ENCODE measurements at regions of chr12 and their contacts with region 1.

Region 1: DNA sequence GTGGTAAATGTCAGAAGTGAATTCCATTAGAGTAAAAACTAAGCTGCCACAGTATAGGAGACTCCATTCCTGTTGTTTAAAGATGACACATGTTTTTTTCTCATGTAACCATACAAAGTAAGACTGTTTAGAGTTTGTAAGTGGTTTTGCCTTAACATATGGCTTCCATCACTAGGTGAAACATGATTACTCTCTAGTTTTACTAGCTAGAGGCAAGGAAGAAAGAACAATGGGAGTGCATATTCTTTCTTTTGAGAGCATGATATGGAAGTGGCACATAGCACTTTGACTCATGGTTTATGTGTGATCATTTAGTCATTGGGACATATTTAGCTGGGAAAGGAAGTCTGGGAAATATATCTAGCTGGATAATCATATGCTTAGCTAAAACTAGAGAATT is 7.7 kb downstream of the ATF7IP start:
- DNase-seq: no peak
- ATAC-seq: peak in 2 of 4 experiments; percentile 40 to 46
- H3K4me3 ChIP-seq: no peak overlapping the region
- H3K4me3 Mint-ChIP-seq: peak overlapping the region; percentile 35 to 51 (median 37)
- H3K27ac ChIP-seq: peak overlapping the region; percentile 36
- H3K27ac Mint-ChIP-seq: peak overlapping the region; percentile 80 to 82
- H3K4me1 ChIP-seq: peaks cover 18 to 38% of the 10 kb centered on the region in 2 experiments
- H3K4me1 Mint-ChIP-seq: peaks cover 61 to 68% (median 67%) of the 10 kb centered on the region in 3 donors
- H3K27me3 ChIP-seq: no peaks in the 10 kb centered on the region
- H3K27me3 Mint-ChIP-seq: no peaks in the 10 kb centered on the region

Region 2: GRCh38 chr12:14384783-14385638 is 11.8 kb after region 1 on chr12:
- CTCF ChIA-PET with region 1: interaction called, 4 to 8 read pairs
- POLR2A ChIA-PET with region 1: interaction called, 11 to 51 read pairs
- DNase-seq: peak; percentile 18 to 87 (median 54)
- ATAC-seq: peak; percentile 88 to 93 (median 91)
- H3K4me3 ChIP-seq: peak overlapping the region; percentile 23 to 43
- H3K4me3 Mint-ChIP-seq: peak overlapping the region; percentile 58 to 75 (median 71)
- H3K27ac ChIP-seq: peak overlapping the region; percentile 86
- H3K27ac Mint-ChIP-seq: peak overlapping the region; percentile 89 to 92
- H3K4me1 ChIP-seq: peaks cover 27 to 45% of the 10 kb centered on the region in 2 experiments
- H3K4me1 Mint-ChIP-seq: peaks cover 60 to 68% (median 63%) of the 10 kb centered on the region in 3 donors
- H3K27me3 ChIP-seq: no peaks in the 10 kb centered on the region
- H3K27me3 Mint-ChIP-seq: no peaks in the 10 kb centered on the region

Region 3: GRCh38 chr12:14394317-14395073 is 21.3 kb after region 1 on chr12:
- CTCF ChIA-PET with region 1: interaction called, 3 to 7 read pairs
- POLR2A ChIA-PET with region 1: interaction called, 4 to 25 read pairs
- DNase-seq: peak in 21 of 35 experiments; percentile 13 to 81 (median 31)
- ATAC-seq: peak; percentile 65 to 81 (median 76)
- H3K4me3 ChIP-seq: peak overlapping the region in 1 of 2 donors; percentile 16
- H3K4me3 Mint-ChIP-seq: peak overlapping the region; percentile 58 to 82 (median 73)
- H3K27ac ChIP-seq: peak overlapping the region; percentile 73
- H3K27ac Mint-ChIP-seq: peak overlapping the region; percentile 92 to 96
- H3K4me1 ChIP-seq: peaks cover 32 to 47% of the 10 kb centered on the region in 2 experiments
- H3K4me1 Mint-ChIP-seq: peaks cover 86 to 91% (median 91%) of the 10 kb centered on the region in 3 donors
- H3K27me3 ChIP-seq: no peaks in the 10 kb centered on the region
- H3K27me3 Mint-ChIP-seq: no peaks in the 10 kb centered on the region

Region 4: GRCh38 chr12:14505626-14506596 is 132.7 kb after region 1 on chr12:
- CTCF ChIA-PET with region 1: no interaction called
- POLR2A ChIA-PET with region 1: no interaction called
- DNase-seq: no peak
- ATAC-seq: no peak
- H3K4me3 ChIP-seq: no peak overlapping the region
- H3K4me3 Mint-ChIP-seq: no peak overlapping the region
- H3K27ac ChIP-seq: no peak overlapping the region
- H3K27ac Mint-ChIP-seq: peak overlapping the region in 1 of 2 donors; percentile 13
- H3K4me1 ChIP-seq: no peaks in the 10 kb centered on the region
- H3K4me1 Mint-ChIP-seq: no peaks in the 10 kb centered on the region
- H3K27me3 ChIP-seq: no peaks in the 10 kb centered on the region
- H3K27me3 Mint-ChIP-seq: no peaks in the 10 kb centered on the region

Measured in T-cell (primary cell).